CD8-positive, alpha-beta T cell (primary cell): ENCODE measurements at regions of chr19 and their contacts with region 1.

Region 1: GRCh38 chr19:17305517-17306284 is at the start of gene MRPL34:
- DNase-seq: peak; percentile 85 to 99 (median 93)
- ATAC-seq: peak; percentile 53
- H3K4me3 ChIP-seq: peak within 1 kb of the TSS; percentile 77 to 79
- H3K4me3 Mint-ChIP-seq: peak within 1 kb of the TSS; percentile 89
- H3K27ac ChIP-seq: peak within 1 kb of the TSS; percentile 55 to 74
- H3K27ac Mint-ChIP-seq: peak within 1 kb of the TSS; percentile 91
- H3K4me1 ChIP-seq: peaks cover 44% of the 10 kb centered on the region
- H3K4me1 Mint-ChIP-seq: peaks cover 48% of the 10 kb centered on the region
- H3K27me3 ChIP-seq: no peaks in the 10 kb centered on the region
- H3K27me3 Mint-ChIP-seq: no peaks in the 10 kb centered on the region
- CTCF ChIP-seq: peak; percentile 57
- total RNA-seq, gene MRPL34: 29.5 to 33.8 TPM

Region 2: GRCh38 chr19:16495982-16496612 is 809.6 kb before region 1 on chr19 and contains the starts of genes C19orf44 and CALR3:
- CTCF ChIA-PET with region 1: no interaction called
- POLR2A ChIA-PET with region 1: no interaction called
- intact Hi-C with region 1: loop called in 1 of 2 experiments (anchors 5 kb)
- DNase-seq: peak; percentile 92 to 98 (median 96)
- ATAC-seq: peak; percentile 99
- H3K4me3 ChIP-seq: peak within 1 kb of the TSS; percentile 66 to 89
- H3K4me3 Mint-ChIP-seq: peak within 1 kb of the TSS; percentile 94
- H3K27ac ChIP-seq: peak within 1 kb of the TSS; percentile 67 to 73
- H3K27ac Mint-ChIP-seq: peak within 1 kb of the TSS; percentile 86
- H3K4me1 ChIP-seq: peaks cover 11% of the 10 kb centered on the region
- H3K4me1 Mint-ChIP-seq: peaks cover 14% of the 10 kb centered on the region
- H3K27me3 ChIP-seq: no peaks in the 10 kb centered on the region
- H3K27me3 Mint-ChIP-seq: no peaks in the 10 kb centered on the region
- CTCF ChIP-seq: no peak
- total RNA-seq, gene C19orf44: 0.52 to 0.61 TPM
- total RNA-seq, gene CALR3: not detected

Region 3: GRCh38 chr19:17215125-17215971 is 90.4 kb before region 1 on chr19 and contains the start of gene USE1:
- CTCF ChIA-PET with region 1: no interaction called
- POLR2A ChIA-PET with region 1: interaction called, 7 read pairs
- intact Hi-C with region 1: loop called in 1 of 2 experiments (anchors 1 kb)
- DNase-seq: peak; percentile 76 to 96 (median 88)
- ATAC-seq: peak; percentile 95
- H3K4me3 ChIP-seq: peak within 1 kb of the TSS; percentile 80 to 90
- H3K4me3 Mint-ChIP-seq: peak within 1 kb of the TSS; percentile 90
- H3K27ac ChIP-seq: peak within 1 kb of the TSS; percentile 65 to 97
- H3K27ac Mint-ChIP-seq: peak within 1 kb of the TSS; percentile 99
- H3K4me1 ChIP-seq: peaks cover 13% of the 10 kb centered on the region
- H3K4me1 Mint-ChIP-seq: peaks cover 15% of the 10 kb centered on the region
- H3K27me3 ChIP-seq: no peaks in the 10 kb centered on the region
- H3K27me3 Mint-ChIP-seq: no peaks in the 10 kb centered on the region
- CTCF ChIP-seq: no peak
- total RNA-seq, gene USE1: 23.1 to 25.3 TPM

Region 4: DNA sequence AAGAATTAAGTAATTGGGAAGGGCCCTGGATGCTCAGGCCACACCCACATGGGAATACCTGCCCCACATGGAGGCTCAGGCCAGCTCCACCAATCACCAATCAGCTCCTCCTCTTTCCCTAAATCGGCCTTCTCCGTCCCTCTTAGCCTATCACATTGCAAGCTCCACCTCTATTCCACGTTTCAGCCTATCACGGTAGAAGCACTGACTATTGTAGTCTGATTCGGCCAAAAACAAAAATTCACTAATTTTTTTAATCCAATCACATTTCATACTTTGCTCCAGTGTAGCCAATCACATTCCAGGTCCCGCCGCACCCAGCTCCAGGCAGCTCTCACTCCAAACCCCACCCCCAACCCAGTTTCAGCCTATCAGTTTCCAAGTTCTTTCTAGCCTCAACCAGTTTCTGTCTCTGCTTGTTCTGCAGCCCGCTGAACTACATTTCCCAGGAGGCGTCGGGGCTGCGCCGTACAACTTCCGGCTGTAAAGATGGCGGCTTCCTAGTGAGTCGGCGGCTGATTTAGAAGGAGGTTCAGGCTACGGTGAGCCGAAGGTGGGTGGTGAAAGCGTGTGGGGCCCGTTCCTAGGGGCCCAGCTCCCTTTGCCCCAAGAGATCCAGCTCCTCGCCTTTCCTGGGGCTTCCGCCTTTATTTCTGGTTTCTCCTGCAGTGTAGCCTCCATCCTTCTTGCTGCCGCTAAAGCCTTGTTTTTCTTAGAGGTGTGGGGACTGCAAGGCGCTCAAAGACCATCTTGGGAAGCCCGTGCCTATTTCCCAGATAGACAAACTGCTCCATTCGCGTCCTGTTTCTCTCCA is 38.5 kb before region 1 on chr19 and contains the start of gene BABAM1:
- CTCF ChIA-PET with region 1: interaction called, 9 read pairs
- POLR2A ChIA-PET with region 1: interaction called, 3 read pairs
- intact Hi-C with region 1: loop called (anchors 1 kb)
- DNase-seq: peak; percentile 81 to 98 (median 92)
- ATAC-seq: peak; percentile 93
- H3K4me3 ChIP-seq: peak within 1 kb of the TSS; percentile 72 to 82
- H3K4me3 Mint-ChIP-seq: peak within 1 kb of the TSS; percentile 79
- H3K27ac ChIP-seq: peak within 1 kb of the TSS; percentile 61 to 77
- H3K27ac Mint-ChIP-seq: peak within 1 kb of the TSS; percentile 63
- H3K4me1 ChIP-seq: peaks cover 14% of the 10 kb centered on the region
- H3K4me1 Mint-ChIP-seq: peaks cover 18% of the 10 kb centered on the region
- H3K27me3 ChIP-seq: no peaks in the 10 kb centered on the region
- H3K27me3 Mint-ChIP-seq: no peaks in the 10 kb centered on the region
- CTCF ChIP-seq: no peak
- total RNA-seq, gene BABAM1: 46.9 to 58.0 TPM

Region 5: DNA sequence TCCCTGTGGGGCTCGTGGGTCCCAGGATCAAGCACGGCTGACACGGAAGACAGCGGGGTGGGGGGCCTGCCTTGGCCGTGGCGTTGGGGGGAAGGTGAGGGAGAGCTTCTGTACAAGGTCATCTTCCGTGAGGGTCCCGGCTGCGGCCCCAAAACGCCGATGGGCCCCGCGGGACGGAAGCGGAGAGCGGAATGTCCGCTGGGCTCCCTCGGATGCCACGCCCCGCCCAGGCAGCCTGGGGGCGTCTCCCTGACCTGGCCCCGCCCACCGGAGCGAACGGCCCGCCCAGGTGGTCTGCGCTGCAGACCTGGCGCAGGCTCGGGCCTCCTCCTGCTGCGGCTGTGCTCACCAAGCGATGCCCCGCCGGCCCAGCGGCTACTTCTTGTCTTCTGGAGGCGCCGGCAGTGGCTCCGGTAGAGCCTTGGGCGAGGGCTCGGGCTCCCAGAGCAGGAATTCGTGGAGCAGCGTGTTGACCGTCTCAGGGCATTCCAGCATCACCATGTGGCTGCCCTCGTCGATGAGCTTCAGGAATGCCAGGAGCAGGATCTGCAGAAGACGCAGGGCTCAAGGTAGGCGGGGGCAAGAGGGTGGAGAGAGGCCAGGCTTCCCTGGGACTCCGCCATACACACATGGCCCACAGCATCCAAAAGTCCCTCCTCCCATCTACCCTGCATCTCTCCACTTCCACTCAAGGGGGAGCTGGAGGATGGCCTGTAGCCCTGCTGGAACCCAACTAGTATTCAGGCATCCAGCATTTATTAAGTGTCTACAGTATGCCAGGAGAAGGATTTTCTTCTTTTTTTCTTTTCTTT is 13.2 kb before region 1 on chr19:
- CTCF ChIA-PET with region 1: interaction called, 29 read pairs
- POLR2A ChIA-PET with region 1: interaction called, 16 read pairs
- intact Hi-C with region 1: loop called (anchors 1 kb)
- DNase-seq: peak; percentile 61 to 90 (median 81)
- ATAC-seq: peak; percentile 96
- H3K4me3 ChIP-seq: peak overlapping the region; percentile 73 to 94
- H3K4me3 Mint-ChIP-seq: peak overlapping the region; percentile 86
- H3K27ac ChIP-seq: no peak overlapping the region
- H3K27ac Mint-ChIP-seq: peak overlapping the region; percentile 77
- H3K4me1 ChIP-seq: peaks cover 5% of the 10 kb centered on the region
- H3K4me1 Mint-ChIP-seq: peaks cover 6% of the 10 kb centered on the region
- H3K27me3 ChIP-seq: no peaks in the 10 kb centered on the region
- H3K27me3 Mint-ChIP-seq: peaks cover 3% of the 10 kb centered on the region
- CTCF ChIP-seq: peak; percentile 82

Region 6: DNA sequence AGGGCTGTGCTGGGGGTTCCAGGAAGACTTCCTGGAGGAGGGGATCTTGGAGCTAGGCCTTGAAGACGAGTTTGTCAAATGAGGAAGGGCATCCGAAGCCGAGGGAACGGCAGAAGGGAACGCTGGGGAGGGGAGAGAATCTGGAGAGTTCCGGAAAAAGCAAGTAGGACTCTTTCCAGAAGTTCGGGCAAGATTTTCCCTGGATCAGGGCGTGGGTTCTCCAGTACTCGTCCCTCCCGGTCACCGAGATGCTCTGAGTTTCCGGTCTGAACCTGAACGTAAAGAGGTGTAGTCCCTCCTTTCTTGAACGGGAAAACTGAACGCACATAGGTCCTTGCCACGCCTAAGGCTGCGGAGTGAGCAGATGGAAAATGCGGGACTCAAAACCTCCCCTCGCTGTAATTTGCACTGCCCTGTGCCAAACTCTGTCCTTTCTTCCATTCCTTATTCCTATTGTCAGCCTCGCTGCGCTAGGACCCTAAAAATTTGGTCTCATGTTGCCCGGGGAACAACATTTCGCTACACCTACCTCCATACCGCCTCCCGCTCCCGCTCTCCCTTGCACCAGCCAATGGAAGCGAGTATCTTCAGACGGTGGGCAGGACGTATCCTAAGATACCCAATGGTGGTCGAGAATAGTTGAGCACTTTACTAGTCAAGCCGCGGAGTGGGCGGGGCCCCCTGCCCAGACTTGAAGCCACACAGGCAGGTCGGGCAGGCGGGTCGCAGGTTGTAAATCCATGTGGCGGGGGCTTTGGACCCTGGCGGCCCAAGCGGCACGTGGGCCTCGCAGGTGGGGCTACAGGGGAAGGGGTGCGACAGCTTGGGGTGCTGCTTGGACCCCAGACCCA is 31.4 kb after region 1 on chr19 and contains the start of gene GTPBP3:
- CTCF ChIA-PET with region 1: interaction called, 7 read pairs
- POLR2A ChIA-PET with region 1: interaction called, 29 read pairs
- intact Hi-C with region 1: loop called (anchors 1 kb)
- DNase-seq: peak; percentile 90 to 99 (median 95)
- ATAC-seq: peak; percentile 90
- H3K4me3 ChIP-seq: peak within 1 kb of the TSS; percentile 90 to 98
- H3K4me3 Mint-ChIP-seq: peak within 1 kb of the TSS; percentile 88
- H3K27ac ChIP-seq: peak within 1 kb of the TSS; percentile 75 to 91
- H3K27ac Mint-ChIP-seq: peak within 1 kb of the TSS; percentile 91
- H3K4me1 ChIP-seq: peaks cover 34% of the 10 kb centered on the region
- H3K4me1 Mint-ChIP-seq: peaks cover 34% of the 10 kb centered on the region
- H3K27me3 ChIP-seq: no peaks in the 10 kb centered on the region
- H3K27me3 Mint-ChIP-seq: no peaks in the 10 kb centered on the region
- CTCF ChIP-seq: no peak
- total RNA-seq, gene GTPBP3: 20.8 to 25.7 TPM